Left lung (tissue), 14 donors: ENCODE measurements at regions of chr9 and their contacts with region 1.

Region 1: DNA sequence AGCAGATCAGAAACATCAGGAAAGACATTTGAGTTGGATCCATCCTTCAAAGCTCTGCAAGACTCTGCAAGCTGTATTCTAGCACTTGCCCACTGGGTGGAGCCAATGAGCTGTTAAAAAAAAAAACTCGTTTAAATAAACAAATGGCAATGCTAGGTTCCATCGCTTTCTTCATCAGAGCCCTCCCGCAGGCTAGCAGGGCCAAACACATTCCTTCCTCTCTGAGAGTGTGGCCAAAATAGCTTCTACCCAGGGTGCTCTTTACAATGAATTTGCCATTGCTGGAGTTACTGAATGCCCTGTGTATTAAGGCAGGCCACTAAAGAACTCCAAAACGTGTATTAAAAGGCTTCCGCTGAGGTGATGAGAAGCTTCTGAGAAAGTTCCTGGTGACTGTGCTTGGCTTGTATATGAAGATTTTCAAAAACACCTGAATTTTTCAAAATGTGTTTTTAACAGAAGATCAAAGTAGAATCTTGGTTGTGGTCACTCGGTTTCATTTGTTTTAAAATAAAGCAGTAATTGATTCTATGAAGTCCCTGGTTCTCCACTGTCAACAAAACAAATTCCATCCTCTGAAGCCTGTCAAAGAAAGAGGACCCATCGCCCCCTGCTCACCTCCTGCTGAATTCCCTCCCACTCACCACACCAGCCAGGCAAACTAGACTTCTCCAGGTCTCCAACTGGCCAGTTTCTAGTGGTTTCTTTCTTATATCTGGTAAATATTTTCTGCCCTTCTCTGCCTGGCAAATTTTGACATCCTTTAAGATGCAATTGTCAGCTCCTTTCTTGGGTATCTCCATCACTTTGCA is 36.5 kb upstream of the EQTN start:
- DNase-seq: peak in 2 of 4 donors; percentile 83 to 87
- ATAC-seq: peak; percentile 91
- H3K4me3 ChIP-seq: no peak overlapping the region
- H3K27ac ChIP-seq: no peak overlapping the region
- H3K4me1 ChIP-seq: peaks cover 8 to 16% of the 10 kb centered on the region in 2 donors
- H3K27me3 ChIP-seq: no peaks in the 10 kb centered on the region
- CTCF ChIP-seq: peak; percentile 87 to 89

Region 2: GRCh38 chr9:27407986-27408385 is 74.5 kb after region 1 on chr9:
- intact Hi-C with region 1: no loop called
- DNase-seq: no peak
- ATAC-seq: peak; percentile 47
- H3K4me3 ChIP-seq: no peak overlapping the region
- H3K27ac ChIP-seq: no peak overlapping the region
- H3K4me1 ChIP-seq: peaks cover 5 to 6% of the 10 kb centered on the region in 2 donors
- H3K27me3 ChIP-seq: no peaks in the 10 kb centered on the region
- CTCF ChIP-seq: no peak

Region 3: GRCh38 chr9:27529316-27530278 is 196.2 kb after region 1 on chr9 and contains the start of gene MOB3B:
- intact Hi-C with region 1: loop called (anchors 5 to 10 kb)
- DNase-seq: peak; percentile 75 to 96 (median 86)
- ATAC-seq: peak; percentile 89
- H3K4me3 ChIP-seq: peak within 1 kb of the TSS; percentile 70 to 81
- H3K27ac ChIP-seq: peak within 1 kb of the TSS; percentile 76 to 87
- H3K4me1 ChIP-seq: peaks cover 4 to 33% of the 10 kb centered on the region in 2 donors
- H3K27me3 ChIP-seq: peaks cover 0 to 26% of the 10 kb centered on the region in 2 donors
- CTCF ChIP-seq: peak; percentile 92 to 97
- polyA plus RNA-seq, gene MOB3B: 14.3 to 18.3 (median 16.1) TPM

Region 4: DNA sequence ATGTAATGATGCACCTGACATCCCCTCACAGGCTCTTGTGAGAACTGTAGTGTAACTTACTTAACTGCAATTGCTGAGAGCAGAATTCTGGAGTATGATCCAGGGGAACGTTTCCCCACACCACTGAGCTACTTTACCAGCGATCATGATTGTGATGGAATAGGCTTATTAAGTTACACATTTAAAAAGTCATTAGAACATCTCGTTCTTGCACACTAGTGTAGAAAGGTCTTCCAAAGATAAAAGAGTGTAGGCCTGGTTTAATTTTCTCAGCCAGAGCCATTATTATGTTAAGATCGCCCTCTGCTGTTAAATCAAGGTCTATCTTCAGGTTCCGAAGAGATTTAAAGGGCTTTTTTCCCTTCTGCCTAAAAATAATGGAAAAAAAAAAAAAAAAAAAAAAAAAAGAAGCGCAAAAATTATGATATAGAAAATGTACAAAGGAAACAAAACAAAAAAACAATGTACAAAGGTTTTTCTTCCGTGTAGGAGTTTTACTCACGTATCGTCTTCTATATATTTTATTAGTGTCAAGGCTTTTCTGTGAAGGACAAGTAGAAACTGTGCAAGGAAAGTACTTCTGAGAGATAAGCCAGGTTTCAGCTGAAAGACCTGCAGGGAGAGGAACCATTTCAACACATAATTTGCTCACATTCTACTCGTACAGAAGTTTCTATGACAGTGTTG is 214.8 kb after region 1 on chr9:
- intact Hi-C with region 1: loop called in 1 of 2 experiments (anchors 5 kb)
- DNase-seq: peak in 2 of 4 donors; percentile 58 to 60
- ATAC-seq: peak; percentile 92
- H3K4me3 ChIP-seq: no peak overlapping the region
- H3K27ac ChIP-seq: no peak overlapping the region
- H3K4me1 ChIP-seq: no peaks in the 10 kb centered on the region
- H3K27me3 ChIP-seq: no peaks in the 10 kb centered on the region
- CTCF ChIP-seq: peak; percentile 1 to 41